Activated naive CD4-positive, alpha-beta T cell treated with anti-CD3 and anti-CD28 coated beads for 36 hours (primary cell): ENCODE measurements at regions of chr4 and their contacts with region 1.

Region 1: DNA sequence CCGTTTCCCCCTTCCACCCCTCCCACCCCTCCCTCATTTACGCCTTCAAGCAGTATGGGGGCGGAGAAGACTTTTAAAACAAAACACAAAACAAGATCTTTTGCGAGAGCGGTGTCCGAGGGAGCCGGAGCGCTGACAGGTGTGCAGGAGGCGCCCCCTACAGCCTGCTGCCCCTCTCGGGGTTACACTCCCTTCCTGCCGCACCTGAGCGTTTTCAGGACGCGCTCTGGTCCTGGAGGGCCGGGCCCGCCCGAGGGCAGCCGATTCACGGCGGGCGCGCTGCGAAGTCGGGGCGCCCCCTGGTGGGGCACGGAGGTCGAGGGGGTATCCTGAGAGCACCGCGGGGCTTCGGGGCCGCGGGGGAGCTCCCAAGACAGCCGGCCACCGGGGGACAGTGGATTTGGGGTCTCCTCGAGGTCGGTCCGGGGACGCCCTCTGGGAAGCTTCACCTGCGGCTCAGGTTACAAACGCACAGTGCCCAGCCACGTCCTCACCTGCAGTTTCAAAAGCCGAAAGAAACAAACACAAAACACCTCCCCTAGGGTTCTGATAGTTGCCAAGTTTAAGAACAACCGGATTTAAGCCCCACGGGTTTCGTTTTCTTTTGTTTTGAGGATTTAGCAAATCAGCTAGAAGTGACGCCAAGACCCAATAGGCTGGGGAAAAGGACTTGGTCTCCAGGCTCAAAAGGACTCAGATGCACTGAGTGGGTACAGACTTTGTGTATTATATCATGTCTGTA is 8.0 kb upstream of the NEUROG2 start:
- DNase-seq: peak; percentile 90
- H3K4me3 Mint-ChIP-seq: peak overlapping the region; percentile 75
- H3K27ac Mint-ChIP-seq: no peak overlapping the region
- H3K4me1 Mint-ChIP-seq: peaks cover 31% of the 10 kb centered on the region
- H3K27me3 Mint-ChIP-seq: peaks cover 45% of the 10 kb centered on the region

Region 2: DNA sequence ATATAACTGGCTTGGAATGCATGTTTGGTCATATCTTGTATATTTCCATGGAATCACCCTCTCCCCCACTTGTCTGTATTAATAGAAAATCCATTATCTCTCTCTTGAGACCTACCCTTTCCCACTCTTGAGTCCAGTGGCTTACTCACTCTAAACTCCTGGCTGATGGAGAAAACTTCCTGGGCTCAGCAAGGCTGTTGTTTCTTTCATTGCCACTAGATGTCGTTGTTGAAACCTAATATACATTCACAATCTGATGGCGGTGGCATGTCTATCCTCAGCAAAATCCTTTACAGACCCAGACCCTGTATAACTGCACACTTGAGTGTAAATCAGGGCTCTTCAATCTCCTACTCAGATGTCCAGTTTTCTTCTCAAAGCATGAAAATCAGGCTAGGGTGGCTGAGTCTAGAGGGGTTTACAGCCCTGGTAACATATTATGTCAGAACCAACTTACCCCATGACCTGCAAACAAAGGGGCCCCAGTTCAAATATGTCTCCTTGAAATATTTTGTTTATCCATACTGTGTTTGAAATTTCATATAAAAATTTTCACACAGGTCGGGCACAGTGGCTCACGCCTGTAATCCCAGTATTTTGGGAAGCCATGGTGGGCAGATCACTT is 448.7 kb before region 1 on chr4:
- CTCF ChIA-PET with region 1: interaction called, 3 read pairs
- intact Hi-C with region 1: loop called (anchors 1 kb)
- DNase-seq: peak; percentile 48
- H3K4me3 Mint-ChIP-seq: no peak overlapping the region
- H3K27ac Mint-ChIP-seq: no peak overlapping the region
- H3K4me1 Mint-ChIP-seq: no peaks in the 10 kb centered on the region
- H3K27me3 Mint-ChIP-seq: peaks cover 3% of the 10 kb centered on the region

Region 3: GRCh38 chr4:112145326-112145819 is 378.6 kb before region 1 on chr4 and contains the start of gene FAM241A:
- CTCF ChIA-PET with region 1: no interaction called
- intact Hi-C with region 1: loop called (anchors 1 kb)
- DNase-seq: peak; percentile 89
- H3K4me3 Mint-ChIP-seq: peak within 1 kb of the TSS; percentile 91
- H3K27ac Mint-ChIP-seq: peak within 1 kb of the TSS; percentile 93
- H3K4me1 Mint-ChIP-seq: peaks cover 30% of the 10 kb centered on the region
- H3K27me3 Mint-ChIP-seq: no peaks in the 10 kb centered on the region
- total RNA-seq, gene FAM241A: 2.2 to 2.5 TPM

Region 4: GRCh38 chr4:112214390-112215264 is 309.3 kb before region 1 on chr4:
- CTCF ChIA-PET with region 1: interaction called, 5 read pairs
- intact Hi-C with region 1: loop called (anchors 1 kb)
- DNase-seq: no peak
- H3K4me3 Mint-ChIP-seq: no peak overlapping the region
- H3K27ac Mint-ChIP-seq: no peak overlapping the region
- H3K4me1 Mint-ChIP-seq: peaks cover 14% of the 10 kb centered on the region
- H3K27me3 Mint-ChIP-seq: no peaks in the 10 kb centered on the region

Region 5: GRCh38 chr4:112321776-112322684 is 201.9 kb before region 1 on chr4:
- CTCF ChIA-PET with region 1: interaction called, 16 read pairs
- intact Hi-C with region 1: loop called (anchors 1 kb)
- DNase-seq: peak; percentile 90
- H3K4me3 Mint-ChIP-seq: no peak overlapping the region
- H3K27ac Mint-ChIP-seq: no peak overlapping the region
- H3K4me1 Mint-ChIP-seq: peaks cover 19% of the 10 kb centered on the region
- H3K27me3 Mint-ChIP-seq: no peaks in the 10 kb centered on the region

Region 6: GRCh38 chr4:112546476-112546875 is 22.5 kb after region 1 on chr4:
- CTCF ChIA-PET with region 1: no interaction called
- intact Hi-C with region 1: no loop called
- DNase-seq: no peak
- H3K4me3 Mint-ChIP-seq: no peak overlapping the region
- H3K27ac Mint-ChIP-seq: no peak overlapping the region
- H3K4me1 Mint-ChIP-seq: no peaks in the 10 kb centered on the region
- H3K27me3 Mint-ChIP-seq: no peaks in the 10 kb centered on the region

Region 7: GRCh38 chr4:112604589-112604988 is 80.7 kb after region 1 on chr4:
- CTCF ChIA-PET with region 1: no interaction called
- intact Hi-C with region 1: loop called (anchors 1 kb)
- DNase-seq: peak; percentile 44
- H3K4me3 Mint-ChIP-seq: no peak overlapping the region
- H3K27ac Mint-ChIP-seq: no peak overlapping the region
- H3K4me1 Mint-ChIP-seq: no peaks in the 10 kb centered on the region
- H3K27me3 Mint-ChIP-seq: no peaks in the 10 kb centered on the region

Region 8: DNA sequence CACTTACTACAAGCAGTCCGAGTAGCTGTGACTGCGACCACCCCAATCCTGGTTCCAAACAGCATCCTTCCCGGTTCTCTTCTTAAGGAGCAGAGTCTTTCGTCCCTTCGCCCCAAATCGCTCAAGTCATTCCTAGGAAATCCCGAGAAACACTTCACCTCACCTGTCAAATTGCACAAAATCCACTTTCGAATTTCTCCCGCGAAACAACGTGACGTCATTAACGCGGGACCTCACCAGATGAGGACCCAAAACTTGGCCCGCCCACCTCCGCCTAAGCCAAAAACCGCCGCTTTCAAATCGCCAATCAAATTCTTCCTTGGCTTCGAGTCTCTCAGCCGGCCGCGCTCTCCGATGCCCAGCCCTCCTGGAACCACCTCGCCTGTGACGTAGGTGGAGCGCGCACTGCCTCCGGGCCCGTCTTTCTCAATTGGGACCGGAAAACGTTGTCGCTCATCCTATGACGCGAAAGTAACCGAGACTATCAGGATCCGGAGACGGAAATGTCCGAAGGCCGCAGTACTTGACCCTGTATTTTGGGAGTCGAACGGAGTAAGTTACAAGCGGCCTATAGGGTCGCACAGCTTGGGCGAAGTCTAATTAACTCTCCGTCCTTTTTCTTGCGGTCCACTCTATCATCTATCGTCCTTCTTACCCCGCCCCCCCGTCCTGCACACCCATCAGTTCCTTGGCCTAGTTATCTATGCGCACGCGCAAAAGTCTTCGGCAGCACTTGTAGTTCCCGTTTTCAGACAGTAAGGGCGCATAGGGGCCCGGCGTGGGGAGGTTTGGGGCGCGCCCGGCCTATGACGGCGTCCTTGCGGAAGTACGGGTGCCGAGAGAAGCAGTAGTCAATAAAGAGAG is 113.0 kb after region 1 on chr4 and contains the starts of genes LARP7 and ZGRF1:
- CTCF ChIA-PET with region 1: no interaction called
- intact Hi-C with region 1: no loop called
- DNase-seq: peak; percentile 99
- H3K4me3 Mint-ChIP-seq: no peak within 1 kb of the TSS
- H3K27ac Mint-ChIP-seq: peak within 1 kb of the TSS; percentile 16
- H3K4me1 Mint-ChIP-seq: peaks cover 27% of the 10 kb centered on the region
- H3K27me3 Mint-ChIP-seq: no peaks in the 10 kb centered on the region
- total RNA-seq, gene LARP7: 41.5 to 41.9 TPM
- total RNA-seq, gene ZGRF1: 40.0 to 43.0 TPM

Region 9: GRCh38 chr4:112817933-112818593 is 294.1 kb after region 1 on chr4:
- CTCF ChIA-PET with region 1: no interaction called
- intact Hi-C with region 1: no loop called
- DNase-seq: peak; percentile 88
- H3K4me3 Mint-ChIP-seq: peak overlapping the region; percentile 79
- H3K27ac Mint-ChIP-seq: peak overlapping the region; percentile 62
- H3K4me1 Mint-ChIP-seq: peaks cover 15% of the 10 kb centered on the region
- H3K27me3 Mint-ChIP-seq: peaks cover 36% of the 10 kb centered on the region